ENCODE measurements at regions of chr11 and their contacts with region 1.

Region 1: DNA sequence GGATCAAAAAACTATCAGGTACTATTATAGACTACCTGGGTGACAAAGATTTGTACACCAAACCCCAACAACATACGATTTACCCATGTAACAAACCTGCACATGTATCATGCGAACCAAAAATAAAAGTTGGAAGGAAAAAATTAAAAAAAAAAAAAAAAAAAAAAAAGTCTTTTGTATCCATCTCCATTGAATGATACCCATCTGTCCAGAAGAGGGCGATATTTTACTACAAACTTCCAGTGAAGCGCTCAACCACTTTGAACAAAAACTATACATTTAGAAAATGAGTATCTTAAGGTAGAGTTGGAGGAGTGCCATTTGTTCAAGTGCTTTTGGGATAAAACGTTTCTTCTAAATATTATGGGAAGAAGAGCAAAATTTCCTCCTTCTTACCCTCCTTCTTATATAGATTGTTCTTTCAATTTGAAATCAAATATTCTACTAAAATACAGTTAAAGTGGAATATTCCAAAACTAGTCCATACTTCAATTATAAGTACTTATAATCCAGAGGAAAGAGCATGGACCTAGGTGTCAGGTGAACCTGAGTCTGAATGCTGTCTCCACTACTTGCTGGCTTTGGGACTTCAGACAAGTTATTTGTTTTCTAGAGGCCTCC is 23.3 kb downstream of the ARL14EP start:
- DNase-seq: no peak
- H3K4me3 ChIP-seq: no peak overlapping the region
- H3K27ac ChIP-seq: no peak overlapping the region
- H3K4me1 ChIP-seq: no peaks in the 10 kb centered on the region
- H3K27me3 ChIP-seq: no peaks in the 10 kb centered on the region
- CTCF ChIP-seq: peak; percentile 49 to 63 (median 62)
- EP300 ChIP-seq: no peak
- POLR2A ChIP-seq: no peak

Region 2: DNA sequence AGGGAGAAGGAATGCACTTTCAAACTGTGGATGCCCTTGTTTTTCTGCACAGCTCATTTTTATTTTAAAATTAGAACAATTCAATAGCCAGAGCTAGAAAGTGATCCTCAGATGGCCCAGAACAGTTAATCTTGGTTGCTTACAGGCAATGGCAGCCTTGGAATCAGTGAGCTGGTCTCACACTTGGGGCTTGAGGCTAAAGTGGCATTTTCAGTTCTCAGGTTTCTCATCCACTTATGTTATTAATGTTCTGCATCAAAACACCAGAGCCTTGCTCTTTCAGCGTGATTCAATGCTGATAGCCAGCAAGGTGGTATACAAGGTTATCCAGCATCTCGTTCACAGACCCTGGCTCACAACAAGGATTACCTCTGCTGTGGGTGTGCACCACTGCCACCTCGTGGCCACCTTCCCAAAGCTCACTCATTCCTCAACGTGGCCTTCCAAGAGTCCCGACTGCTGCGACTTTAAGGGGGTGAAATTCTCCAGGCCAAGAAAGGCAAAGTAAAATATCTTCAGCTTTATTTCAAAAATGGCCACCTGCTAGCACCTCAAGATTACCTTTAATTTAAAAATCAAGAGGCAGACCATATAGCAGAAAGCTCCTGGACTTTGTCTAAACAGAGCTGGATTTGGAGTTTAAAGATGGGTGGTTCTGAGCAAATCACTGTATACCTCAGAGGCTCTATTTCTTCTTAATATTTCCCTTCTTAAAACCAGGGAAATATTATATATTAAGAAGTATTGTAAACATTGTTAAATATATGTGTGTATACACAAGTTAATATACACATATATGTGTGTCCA is 149.6 kb before region 1 on chr11:
- intact Hi-C with region 1: no loop called
- DNase-seq: no peak
- H3K4me3 ChIP-seq: no peak overlapping the region
- H3K27ac ChIP-seq: no peak overlapping the region
- H3K4me1 ChIP-seq: peaks cover 0 to 14% (median 2%) of the 10 kb centered on the region in 4 donors
- H3K27me3 ChIP-seq: no peaks in the 10 kb centered on the region
- CTCF ChIP-seq: peak; percentile 57 to 80 (median 77)
- EP300 ChIP-seq: no peak
- POLR2A ChIP-seq: no peak

Region 3: DNA sequence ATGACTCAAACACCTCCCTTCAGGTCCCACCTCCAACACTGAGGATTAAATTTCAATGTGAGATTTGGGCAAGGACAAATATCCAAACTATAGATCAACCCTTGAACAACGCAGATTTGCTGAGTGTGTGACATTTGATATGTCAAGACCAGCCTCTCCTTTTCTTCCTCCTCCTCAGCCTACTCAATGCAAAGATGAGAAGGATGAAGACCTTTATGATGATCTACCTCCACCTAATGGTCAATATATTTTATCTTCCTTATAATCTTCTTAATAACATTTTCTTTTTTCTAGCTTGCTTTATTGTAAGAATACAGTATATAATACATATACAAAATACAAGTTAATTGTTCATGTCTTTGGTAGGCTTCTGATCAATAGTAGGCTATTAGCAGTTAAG is 307.4 kb after region 1 on chr11:
- intact Hi-C with region 1: loop called (anchors 5 kb)
- DNase-seq: no peak
- H3K4me3 ChIP-seq: no peak overlapping the region
- H3K27ac ChIP-seq: no peak overlapping the region
- H3K4me1 ChIP-seq: no peaks in the 10 kb centered on the region
- H3K27me3 ChIP-seq: no peaks in the 10 kb centered on the region
- CTCF ChIP-seq: no peak
- EP300 ChIP-seq: no peak
- POLR2A ChIP-seq: no peak

Region 4: GRCh38 chr11:30855383-30856006 is 509.3 kb after region 1 on chr11:
- intact Hi-C with region 1: loop called (anchors 5 kb)
- DNase-seq: no peak
- H3K4me3 ChIP-seq: no peak overlapping the region
- H3K27ac ChIP-seq: no peak overlapping the region
- H3K4me1 ChIP-seq: peaks cover 0 to 9% (median 0%) of the 10 kb centered on the region in 4 donors
- H3K27me3 ChIP-seq: no peaks in the 10 kb centered on the region
- CTCF ChIP-seq: peak; percentile 40 to 49 (median 48)
- EP300 ChIP-seq: no peak
- POLR2A ChIP-seq: no peak

Region 5: DNA sequence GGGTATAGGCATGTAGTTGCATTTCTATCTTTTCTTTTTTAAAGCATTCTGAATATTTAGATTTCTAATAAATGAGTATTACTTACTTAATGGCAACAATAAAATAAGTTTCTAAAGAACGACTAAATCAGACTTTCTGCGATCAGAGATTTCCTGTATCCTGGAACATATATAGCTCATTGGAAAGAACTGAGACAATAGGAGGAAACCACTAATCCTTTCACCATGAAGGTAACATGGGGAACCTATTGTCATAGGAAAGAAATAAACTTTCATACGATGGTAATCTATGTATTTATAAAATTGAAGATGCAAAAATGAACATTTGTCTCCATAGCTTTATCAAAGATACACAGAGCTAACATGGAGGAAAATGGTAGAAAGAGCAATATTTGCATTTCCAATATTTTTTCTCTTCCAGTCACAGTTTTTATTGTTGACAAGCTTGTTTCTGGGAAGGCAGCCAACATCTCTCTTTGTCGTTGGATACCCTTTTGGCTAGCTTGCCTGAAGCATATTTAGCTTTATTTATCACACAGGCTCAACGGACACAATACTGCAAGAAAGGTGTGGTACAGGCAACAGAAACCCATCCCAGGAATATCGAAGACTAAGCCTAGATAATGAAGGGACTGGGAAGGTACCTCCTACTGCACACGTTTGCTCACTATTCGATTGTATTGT is 533.3 kb after region 1 on chr11:
- intact Hi-C with region 1: no loop called
- DNase-seq: no peak
- H3K4me3 ChIP-seq: no peak overlapping the region
- H3K27ac ChIP-seq: no peak overlapping the region
- H3K4me1 ChIP-seq: peaks cover 4 to 29% (median 20%) of the 10 kb centered on the region in 4 donors
- H3K27me3 ChIP-seq: no peaks in the 10 kb centered on the region
- CTCF ChIP-seq: no peak
- EP300 ChIP-seq: no peak
- POLR2A ChIP-seq: no peak

Region 6: GRCh38 chr11:30917859-30918478 is 571.8 kb after region 1 on chr11:
- intact Hi-C with region 1: loop called (anchors 2 kb)
- DNase-seq: no peak
- H3K4me3 ChIP-seq: no peak overlapping the region
- H3K27ac ChIP-seq: no peak overlapping the region
- H3K4me1 ChIP-seq: peaks cover 0 to 6% (median 2%) of the 10 kb centered on the region in 4 donors
- H3K27me3 ChIP-seq: peaks cover 0 to 8% (median 0%) of the 10 kb centered on the region in 4 donors
- CTCF ChIP-seq: peak; percentile 67 to 76 (median 74)
- EP300 ChIP-seq: no peak
- POLR2A ChIP-seq: no peak

Measured in esophagus muscularis mucosa (tissue), 4 donors.